Psoas muscle (tissue), 8 donors: ENCODE measurements at regions of chr21 and their contacts with region 1.

Region 1: GRCh38 chr21:21076491-21076890 is 78.3 kb downstream of the NCAM2 start:
- DNase-seq: no peak
- ATAC-seq: no peak
- H3K4me3 ChIP-seq: no peak overlapping the region
- H3K27ac ChIP-seq: no peak overlapping the region
- H3K4me1 ChIP-seq: no peaks in the 10 kb centered on the region
- H3K27me3 ChIP-seq: no peaks in the 10 kb centered on the region
- CTCF ChIP-seq: no peak

Region 2: DNA sequence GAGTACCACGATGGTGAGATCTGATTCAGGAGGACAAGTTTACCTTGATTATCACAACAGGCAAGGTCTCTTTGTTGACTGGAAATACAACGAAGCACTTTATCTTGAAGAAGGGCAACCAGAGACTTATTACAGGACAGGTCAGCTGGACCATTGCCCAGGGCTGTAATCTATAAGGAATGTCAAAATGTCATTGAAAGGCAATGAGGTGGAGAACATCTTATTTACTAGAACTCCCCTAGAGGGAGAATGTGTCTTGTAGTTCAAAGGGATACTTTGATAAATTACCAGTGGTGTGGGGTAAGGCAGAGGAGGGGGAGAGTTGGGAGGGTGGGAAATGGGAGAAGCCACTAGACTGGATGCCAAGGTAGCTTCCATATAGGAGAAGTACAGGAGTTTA is 134.1 kb after region 1 on chr21:
- intact Hi-C with region 1: loop called in 1 of 2 experiments (anchors 5 kb)
- DNase-seq: no peak
- ATAC-seq: no peak
- H3K4me3 ChIP-seq: no peak overlapping the region
- H3K27ac ChIP-seq: no peak overlapping the region
- H3K4me1 ChIP-seq: no peaks in the 10 kb centered on the region
- H3K27me3 ChIP-seq: no peaks in the 10 kb centered on the region
- CTCF ChIP-seq: no peak